ENCODE measurements at regions of chr6 and their contacts with region 1.

Region 1: DNA sequence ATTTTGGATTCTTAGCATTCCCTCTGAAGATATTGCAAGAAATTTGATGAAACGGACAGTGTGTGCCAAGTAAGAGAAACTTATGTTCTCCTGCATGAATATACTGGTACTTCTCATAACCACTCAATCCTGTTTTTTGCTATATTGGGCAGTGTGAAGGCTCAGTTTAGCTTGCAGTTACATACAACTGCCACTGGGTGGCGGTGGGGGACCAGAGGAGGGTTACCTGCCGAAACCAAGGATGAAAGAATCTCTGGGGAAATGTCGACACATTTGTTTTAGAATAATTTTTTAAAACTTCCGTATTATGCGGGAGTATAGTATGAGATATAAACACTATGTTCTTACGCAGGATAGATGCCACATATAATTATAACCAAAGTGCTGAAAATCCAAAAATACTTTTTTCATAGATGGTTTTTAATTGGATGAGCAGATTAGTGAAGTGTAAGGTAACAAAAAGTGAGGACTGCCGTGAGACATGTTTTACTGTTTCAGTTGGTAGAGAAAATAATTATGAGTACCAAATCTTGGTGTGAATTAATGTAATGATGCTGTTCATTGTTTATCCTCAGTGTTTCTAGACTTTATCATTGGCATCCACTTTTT is 9.7 kb downstream of the TRMT11 start:
- DNase-seq: peak; percentile 55
- ATAC-seq: peak; percentile 97
- H3K4me3 ChIP-seq: no peak overlapping the region
- H3K27ac ChIP-seq: no peak overlapping the region
- H3K4me1 ChIP-seq: no peaks in the 10 kb centered on the region
- H3K27me3 ChIP-seq: no peaks in the 10 kb centered on the region
- CTCF ChIP-seq: peak; percentile 99

Region 2: DNA sequence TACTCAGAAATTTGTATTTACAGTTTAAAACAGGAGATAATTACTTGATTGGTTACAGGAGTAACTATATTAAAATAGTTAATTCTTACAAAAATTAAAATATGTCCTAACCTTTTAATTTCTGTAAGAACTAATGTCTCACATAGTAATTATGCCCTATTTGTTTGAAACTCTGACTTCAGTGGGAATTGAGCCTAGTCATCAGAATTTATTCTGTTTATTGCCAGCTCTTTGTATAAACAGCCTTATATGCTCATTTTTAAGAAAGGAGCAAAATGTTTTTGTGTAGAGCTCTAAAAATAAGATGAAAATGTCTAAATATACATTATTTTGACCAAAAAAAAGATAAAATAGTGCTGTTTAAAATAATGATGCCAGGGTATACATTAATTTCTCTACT is 11.7 kb after region 1 on chr6:
- CTCF ChIA-PET with region 1: interaction called, 10 read pairs
- POLR2A ChIA-PET with region 1: no interaction called
- in situ Hi-C with region 1: no loop called
- intact Hi-C with region 1: no loop called
- DNase-seq: no peak
- ATAC-seq: no peak
- H3K4me3 ChIP-seq: no peak overlapping the region
- H3K27ac ChIP-seq: no peak overlapping the region
- H3K4me1 ChIP-seq: no peaks in the 10 kb centered on the region
- H3K27me3 ChIP-seq: no peaks in the 10 kb centered on the region
- CTCF ChIP-seq: no peak

Region 3: DNA sequence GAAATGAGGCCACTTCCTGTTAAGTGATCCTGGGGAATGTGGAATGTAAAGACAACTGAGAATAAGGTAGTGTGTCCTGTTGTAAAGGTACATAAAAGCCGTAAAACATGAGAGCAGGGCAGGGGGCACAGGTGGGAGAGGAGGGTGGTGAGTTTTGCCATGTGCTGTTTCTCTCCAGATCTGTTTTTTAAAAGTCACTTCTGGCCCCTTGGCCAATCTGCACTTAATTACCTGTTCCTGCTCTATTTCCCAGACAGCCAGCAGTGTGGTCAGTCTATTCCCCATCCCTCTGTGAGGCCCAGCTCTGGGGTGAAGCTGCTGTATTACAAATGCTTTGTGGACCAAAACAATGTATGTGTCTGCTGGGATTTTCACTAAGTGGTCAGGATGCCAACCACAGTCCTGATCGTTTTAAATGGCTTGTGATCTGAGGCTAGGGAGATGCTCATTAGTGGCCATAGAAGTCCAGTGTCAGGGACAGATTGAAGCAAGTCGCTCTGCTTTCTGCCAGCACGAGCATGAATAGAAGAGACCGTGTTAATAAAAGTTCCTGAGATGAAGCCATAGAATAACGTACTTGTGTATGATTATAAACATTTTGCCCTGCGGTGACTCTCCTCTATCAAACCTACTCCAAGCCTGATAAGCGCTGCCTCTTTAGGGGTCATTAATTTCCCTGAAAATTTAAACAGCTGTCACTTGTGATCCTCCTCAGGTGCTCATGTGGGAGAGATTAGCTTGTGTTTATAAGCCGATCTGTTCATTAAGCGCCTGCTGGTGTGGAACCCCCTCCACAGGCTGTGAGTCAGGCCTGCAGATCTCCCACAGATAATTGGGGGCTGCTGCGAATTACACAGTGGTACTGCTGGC is 232.0 kb after region 1 on chr6:
- CTCF ChIA-PET with region 1: no interaction called
- POLR2A ChIA-PET with region 1: interaction called, 13 read pairs
- in situ Hi-C with region 1: no loop called
- intact Hi-C with region 1: no loop called
- DNase-seq: no peak
- ATAC-seq: no peak
- H3K4me3 ChIP-seq: no peak overlapping the region
- H3K27ac ChIP-seq: no peak overlapping the region
- H3K4me1 ChIP-seq: no peaks in the 10 kb centered on the region
- H3K27me3 ChIP-seq: no peaks in the 10 kb centered on the region
- CTCF ChIP-seq: no peak

Region 4: DNA sequence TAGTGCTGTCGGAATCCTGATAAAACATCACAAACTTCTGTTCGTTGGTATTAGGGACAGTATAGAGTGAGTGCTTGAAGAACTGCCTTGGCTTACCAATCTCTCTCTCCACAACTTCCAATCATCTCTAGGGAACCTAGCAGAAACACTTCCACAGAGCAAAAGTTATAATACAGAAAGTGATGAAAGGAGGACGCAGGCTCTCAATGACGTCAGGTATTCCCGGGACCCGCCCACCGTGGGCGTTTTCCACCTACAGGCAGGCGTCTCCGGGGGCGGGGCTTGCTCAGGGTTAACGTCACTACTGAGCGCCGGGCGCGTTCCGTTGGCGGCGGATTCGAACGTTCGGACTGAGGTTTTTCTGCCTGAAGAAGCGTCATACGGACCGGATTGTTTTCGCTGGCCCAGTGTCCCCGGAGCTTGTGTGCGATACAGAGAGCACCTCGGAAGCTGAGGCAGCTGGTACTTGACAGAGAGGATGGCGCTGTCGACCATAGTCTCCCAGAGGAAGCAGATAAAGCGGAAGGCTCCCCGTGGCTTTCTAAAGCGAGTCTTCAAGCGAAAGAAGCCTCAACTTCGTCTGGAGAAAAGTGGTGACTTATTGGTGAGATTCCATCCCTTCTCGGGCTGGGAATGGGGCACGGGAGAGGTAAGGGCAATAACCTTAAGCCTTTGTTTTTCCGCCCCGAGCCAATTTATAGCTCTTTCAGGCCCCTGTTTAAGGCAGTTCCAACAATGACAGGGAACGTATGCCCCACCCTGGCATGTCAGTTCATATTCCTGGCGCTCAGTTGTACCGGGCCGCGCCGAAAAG is 343.9 kb after region 1 on chr6 and contains the start of gene CENPW:
- CTCF ChIA-PET with region 1: no interaction called
- POLR2A ChIA-PET with region 1: no interaction called
- in situ Hi-C with region 1: no loop called
- intact Hi-C with region 1: loop called (anchors 10 kb)
- DNase-seq: peak; percentile 82
- ATAC-seq: peak; percentile 98
- H3K4me3 ChIP-seq: peak within 1 kb of the TSS; percentile 94 to 98
- H3K27ac ChIP-seq: peak within 1 kb of the TSS; percentile 88
- H3K4me1 ChIP-seq: peaks cover 10% of the 10 kb centered on the region
- H3K27me3 ChIP-seq: no peaks in the 10 kb centered on the region
- CTCF ChIP-seq: no peak
- total RNA-seq, gene CENPW: 62.1 TPM

Region 5: GRCh38 chr6:126427713-126428112 is 431.6 kb after region 1 on chr6:
- CTCF ChIA-PET with region 1: no interaction called
- POLR2A ChIA-PET with region 1: no interaction called
- in situ Hi-C with region 1: no loop called
- intact Hi-C with region 1: loop called (anchors 5 kb)
- DNase-seq: no peak
- ATAC-seq: no peak
- H3K4me3 ChIP-seq: no peak overlapping the region
- H3K27ac ChIP-seq: no peak overlapping the region
- H3K4me1 ChIP-seq: no peaks in the 10 kb centered on the region
- H3K27me3 ChIP-seq: no peaks in the 10 kb centered on the region
- CTCF ChIP-seq: no peak

Region 6: DNA sequence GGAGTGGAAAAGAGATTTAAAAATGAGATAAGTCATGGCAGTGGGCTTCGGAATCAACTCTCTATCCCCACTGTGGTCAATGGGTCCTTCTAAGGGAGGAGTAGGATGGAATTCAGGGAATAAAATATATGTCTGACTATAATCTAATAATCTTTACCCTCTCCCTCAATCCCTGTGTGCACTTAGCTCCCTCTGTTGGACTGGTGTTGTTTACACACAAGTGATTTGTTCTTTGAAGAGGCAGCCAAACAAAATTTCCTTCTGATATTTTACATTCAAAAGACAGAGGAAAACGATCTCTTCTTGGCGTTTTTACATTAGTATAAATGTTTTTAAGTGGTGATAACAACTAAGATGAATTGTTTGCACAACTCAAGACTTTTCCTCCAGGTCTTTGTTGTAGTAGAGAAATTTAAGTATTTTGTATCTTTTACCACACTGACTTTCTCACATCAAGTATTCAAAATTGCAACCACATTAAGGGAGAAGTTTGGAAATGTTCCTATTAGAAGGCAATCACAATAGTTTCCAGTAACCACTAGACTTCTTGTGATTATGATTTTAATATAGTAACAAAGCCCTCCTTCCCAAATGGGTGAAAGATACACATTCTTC is 661.6 kb after region 1 on chr6:
- CTCF ChIA-PET with region 1: no interaction called
- POLR2A ChIA-PET with region 1: no interaction called
- in situ Hi-C with region 1: no loop called
- intact Hi-C with region 1: loop called (anchors 5 kb)
- DNase-seq: peak; percentile 22
- ATAC-seq: 0 out of 2 replicates have a peak, but pooled peaks have one; percentile 62
- H3K4me3 ChIP-seq: no peak overlapping the region
- H3K27ac ChIP-seq: no peak overlapping the region
- H3K4me1 ChIP-seq: no peaks in the 10 kb centered on the region
- H3K27me3 ChIP-seq: no peaks in the 10 kb centered on the region
- CTCF ChIP-seq: peak; percentile 65; the same call in 1 of the 2 replicates

Region 7: GRCh38 chr6:127120787-127121636 is 1124.9 kb after region 1 on chr6:
- CTCF ChIA-PET with region 1: no interaction called
- POLR2A ChIA-PET with region 1: no interaction called
- in situ Hi-C with region 1: no loop called
- intact Hi-C with region 1: loop called (anchors 10 kb)
- DNase-seq: peak; percentile 59
- ATAC-seq: peak; percentile 87
- H3K4me3 ChIP-seq: no peak overlapping the region
- H3K27ac ChIP-seq: no peak overlapping the region
- H3K4me1 ChIP-seq: peaks cover 13% of the 10 kb centered on the region
- H3K27me3 ChIP-seq: peaks cover 55% of the 10 kb centered on the region
- CTCF ChIP-seq: peak; percentile 95